ENCODE measurements at regions of chr11 and their contacts with region 1.

Region 1: GRCh38 chr11:116879800-116880625 is 42.6 kb upstream of the APOA1 start:
- DNase-seq: peak in 1 of 3 donors; percentile 53
- ATAC-seq: peak; percentile 86
- H3K4me3 ChIP-seq: no peak overlapping the region
- H3K4me1 ChIP-seq: no peaks in the 10 kb centered on the region
- CTCF ChIP-seq: peak; percentile 25

Region 2: DNA sequence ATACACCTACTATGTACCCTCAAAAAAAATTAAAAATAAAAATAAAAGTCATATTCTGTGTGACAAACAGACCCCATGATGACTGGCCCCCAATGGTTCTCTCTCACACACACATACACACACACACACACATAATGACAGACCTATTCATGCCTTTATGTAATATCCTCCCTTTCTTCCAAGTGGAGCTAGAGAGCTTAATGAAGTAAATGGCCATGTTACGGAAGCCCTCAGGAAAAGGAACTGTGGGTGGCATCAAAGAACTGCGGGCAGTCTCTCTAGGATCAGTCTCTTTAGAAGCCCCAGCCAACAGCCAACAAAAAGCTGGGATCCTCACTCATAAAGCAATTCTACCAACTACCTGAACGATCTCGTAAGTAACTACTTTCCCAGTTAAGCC is 92.7 kb after region 1 on chr11:
- intact Hi-C with region 1: no loop called
- DNase-seq: no peak
- ATAC-seq: peak; percentile 36
- H3K4me3 ChIP-seq: no peak overlapping the region
- H3K4me1 ChIP-seq: peaks cover 7% of the 10 kb centered on the region
- CTCF ChIP-seq: no peak

Region 3: DNA sequence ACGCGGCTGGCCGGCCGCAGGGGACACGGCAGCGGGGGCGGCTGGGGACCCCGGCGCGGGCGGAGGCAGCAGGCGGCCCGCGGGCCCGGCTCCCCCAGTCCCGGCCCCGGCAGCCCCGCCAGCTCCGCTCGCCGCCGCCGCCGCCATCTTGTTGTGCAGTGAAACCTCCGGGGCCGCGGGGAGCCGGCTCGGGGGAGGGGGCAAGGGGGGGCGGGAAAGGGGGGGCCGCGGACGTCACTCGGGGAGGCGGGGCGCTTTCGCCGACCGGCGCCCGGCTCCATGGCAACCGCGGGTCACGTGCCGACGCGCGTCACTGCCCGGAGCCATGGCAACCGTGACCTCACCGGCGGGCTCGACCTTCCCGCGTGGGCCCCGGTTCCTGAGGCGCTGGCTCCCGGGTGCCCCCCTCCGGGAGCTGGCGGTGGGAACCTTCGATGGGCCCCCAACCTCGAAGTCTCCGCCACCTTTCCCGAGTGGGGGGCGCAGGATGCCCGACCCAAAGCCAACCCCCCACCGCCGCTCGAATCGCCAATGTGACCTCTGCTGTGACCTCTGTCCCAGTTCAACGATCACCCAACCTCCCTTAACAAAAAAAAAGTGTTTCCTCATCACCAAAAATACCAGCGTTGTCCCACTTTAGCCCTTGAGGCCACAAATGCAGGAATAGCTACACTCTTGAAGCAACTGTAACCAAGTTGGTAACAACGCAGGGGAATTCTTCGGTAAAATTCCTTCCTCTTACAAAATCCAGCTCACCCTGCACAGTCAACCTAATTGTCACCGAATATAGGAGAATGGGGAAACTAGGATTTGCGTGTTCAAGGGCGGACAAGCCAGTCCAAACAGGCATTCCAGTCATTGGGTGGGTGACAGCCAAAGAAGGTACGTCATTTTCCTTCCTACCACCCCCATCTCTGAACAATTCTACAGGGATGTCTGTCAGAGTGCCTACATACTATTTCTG is 218.5 kb after region 1 on chr11 and contains the start of gene SIK3:
- intact Hi-C with region 1: loop called in 1 of 2 experiments (anchors 5 kb)
- DNase-seq: peak; percentile 95 to 96 (median 96)
- ATAC-seq: peak; percentile 90
- H3K4me3 ChIP-seq: peak within 1 kb of the TSS; percentile 83
- H3K4me1 ChIP-seq: peaks cover 30% of the 10 kb centered on the region
- CTCF ChIP-seq: peak; percentile 58
- total RNA-seq, gene SIK3: 28.1 to 55.6 (median 41.8) TPM

Region 4: GRCh38 chr11:117107701-117108590 is 227.9 kb after region 1 on chr11:
- intact Hi-C with region 1: loop called in 1 of 2 experiments (anchors 5 kb)
- DNase-seq: no peak
- ATAC-seq: no peak
- H3K4me3 ChIP-seq: no peak overlapping the region
- H3K4me1 ChIP-seq: no peaks in the 10 kb centered on the region
- CTCF ChIP-seq: no peak

Region 5: DNA sequence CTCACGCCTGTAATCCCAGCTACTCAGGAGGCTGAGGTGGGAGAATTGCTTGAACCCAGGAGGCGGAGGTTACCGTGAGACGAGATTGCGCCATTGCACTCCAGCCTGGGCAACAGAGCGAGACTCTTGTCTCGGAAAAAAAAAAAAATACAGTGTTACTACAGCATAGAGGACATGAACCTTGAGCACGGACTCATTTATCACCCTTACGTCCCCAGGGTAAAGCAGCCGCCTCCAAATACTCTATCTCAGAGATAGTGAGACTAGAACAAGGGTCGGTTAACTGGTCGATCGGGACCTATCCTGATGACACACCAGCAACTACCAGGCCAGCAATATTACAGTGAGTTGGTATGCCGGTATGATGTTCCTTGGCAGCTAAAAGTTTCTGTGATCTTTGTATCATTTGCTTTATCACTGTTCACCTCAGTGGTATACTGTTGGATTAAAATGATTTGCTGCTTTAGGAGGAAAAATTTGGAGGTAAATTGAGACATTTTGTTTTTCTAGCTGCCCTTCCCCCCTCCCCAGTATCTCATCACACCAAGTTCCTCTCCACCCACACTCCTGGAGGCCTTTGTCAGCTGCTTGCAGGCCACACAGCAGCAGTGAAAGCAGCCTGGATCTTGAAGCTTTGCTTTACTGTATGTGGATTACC is 291.5 kb after region 1 on chr11:
- intact Hi-C with region 1: no loop called
- DNase-seq: no peak
- ATAC-seq: no peak
- H3K4me3 ChIP-seq: no peak overlapping the region
- H3K4me1 ChIP-seq: no peaks in the 10 kb centered on the region
- CTCF ChIP-seq: no peak